ENCODE measurements at regions of chr9 and their contacts with region 1.

Region 1: GRCh38 chr9:73037613-73038012 is 84.8 kb upstream of the ALDH1A1 start:
- DNase-seq: no peak
- H3K4me3 Mint-ChIP-seq: no peak overlapping the region
- H3K27ac Mint-ChIP-seq: no peak overlapping the region
- H3K4me1 Mint-ChIP-seq: no peaks in the 10 kb centered on the region
- H3K27me3 Mint-ChIP-seq: peaks cover 24% of the 10 kb centered on the region

Region 2: DNA sequence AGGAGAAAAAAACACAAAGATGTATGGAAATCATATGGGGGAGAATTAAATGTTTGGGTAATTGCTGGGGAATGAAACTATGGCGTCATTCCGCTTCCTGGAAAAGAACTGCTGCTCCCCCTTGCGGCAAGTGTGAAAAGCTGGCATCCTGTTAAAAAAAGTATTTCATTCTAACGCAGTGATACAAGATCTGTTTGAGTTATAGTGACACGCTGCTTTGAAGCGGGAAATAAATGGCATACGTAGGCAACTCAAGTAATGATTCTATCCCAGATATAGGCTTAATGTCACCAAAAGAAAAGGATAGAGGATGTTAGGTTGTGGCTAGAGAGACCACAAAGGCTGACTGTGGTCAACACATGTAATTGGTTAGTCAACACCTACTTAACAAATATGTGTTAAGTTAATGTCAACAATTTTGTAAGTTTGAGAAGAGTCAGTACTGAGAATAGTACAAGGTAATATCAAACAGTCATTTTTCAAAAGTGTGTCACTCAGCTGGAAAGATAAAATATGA is 14.5 kb before region 1 on chr9:
- CTCF ChIA-PET with region 1: interaction called, 10 read pairs
- POLR2A ChIA-PET with region 1: no interaction called
- DNase-seq: peak; percentile 48
- H3K4me3 Mint-ChIP-seq: no peak overlapping the region
- H3K27ac Mint-ChIP-seq: no peak overlapping the region
- H3K4me1 Mint-ChIP-seq: peaks cover 11% of the 10 kb centered on the region
- H3K27me3 Mint-ChIP-seq: peaks cover 26% of the 10 kb centered on the region